ENCODE measurements at regions of chr14 and their contacts with region 1.

Region 1: DNA sequence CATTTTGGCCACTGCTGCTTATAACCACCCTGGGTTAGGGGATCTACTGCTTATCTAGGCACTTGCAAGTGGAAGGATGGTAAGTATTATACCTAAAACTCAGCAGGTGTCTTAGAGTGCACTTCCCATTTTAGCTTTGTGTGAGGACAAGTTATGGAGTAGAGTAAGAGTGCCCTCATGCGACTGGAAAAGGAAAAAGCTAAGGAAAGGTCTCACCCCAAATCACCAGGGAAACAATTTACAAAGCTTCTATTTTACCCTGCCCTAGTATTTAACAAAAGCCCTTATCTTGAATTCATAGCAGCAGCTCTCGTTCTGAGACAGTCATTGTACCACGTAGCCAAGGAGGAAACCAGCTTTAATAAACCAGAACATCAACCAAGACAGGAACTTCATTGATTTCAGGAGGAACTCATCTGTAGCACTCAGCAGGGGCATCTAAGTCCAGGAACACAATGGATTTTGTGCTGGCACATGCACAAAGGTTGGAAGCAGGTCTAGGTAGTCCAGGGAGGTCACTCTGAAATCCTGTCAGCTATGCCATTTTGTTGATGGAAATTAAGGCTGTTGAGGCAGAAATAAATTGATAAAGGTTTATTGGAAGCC is 2.9 kb downstream of the RDH12 start:
- DNase-seq: no peak
- H3K4me3 ChIP-seq: no peak overlapping the region
- H3K27me3 ChIP-seq: no peaks in the 10 kb centered on the region
- CTCF ChIP-seq: peak; percentile 79

Region 2: GRCh38 chr14:67418401-67419174 is 286.0 kb before region 1 on chr14:
- CTCF ChIA-PET with region 1: no interaction called
- POLR2A ChIA-PET with region 1: no interaction called
- DNase-seq: no peak
- H3K4me3 ChIP-seq: no peak overlapping the region
- H3K27me3 ChIP-seq: no peaks in the 10 kb centered on the region
- CTCF ChIP-seq: no peak

Region 3: DNA sequence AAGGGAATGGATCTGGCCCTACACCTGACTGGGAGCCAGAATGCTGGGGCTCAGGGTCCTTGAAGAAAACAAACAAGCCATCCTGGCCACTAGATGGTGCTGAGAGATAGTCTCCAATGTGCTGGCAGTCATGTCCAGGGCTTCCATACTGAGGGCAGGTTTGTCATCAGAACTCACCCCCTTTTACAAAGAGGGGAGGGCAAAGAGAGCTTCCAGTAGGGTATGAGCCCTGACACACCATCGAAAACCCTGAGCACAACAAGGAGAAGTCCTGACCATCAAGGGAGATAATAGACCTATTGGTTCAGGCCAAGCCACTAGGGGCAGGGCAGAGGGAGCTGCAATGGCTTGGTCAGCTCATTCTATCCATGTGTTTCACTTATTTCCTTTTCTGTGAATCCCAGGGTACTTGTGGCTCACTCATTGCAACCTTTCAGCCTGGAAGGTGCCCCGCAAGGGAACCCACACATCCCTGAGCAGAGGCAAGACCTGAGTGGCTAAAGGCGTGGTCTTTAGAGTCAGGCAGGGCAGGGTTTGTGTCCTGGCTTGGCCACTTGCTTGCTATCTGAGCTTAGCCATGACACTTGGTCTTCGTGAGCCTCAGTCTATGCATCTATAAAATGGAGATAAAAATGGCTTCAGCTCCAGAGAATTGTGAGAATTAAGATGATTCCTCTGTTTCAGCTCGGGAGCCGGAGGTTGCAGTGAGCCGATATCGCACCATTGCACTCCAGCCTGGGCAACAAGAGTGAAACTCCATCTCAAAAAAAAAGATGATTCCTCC is 177.7 kb before region 1 on chr14:
- CTCF ChIA-PET with region 1: interaction called, 28 read pairs
- POLR2A ChIA-PET with region 1: no interaction called
- DNase-seq: no peak
- H3K4me3 ChIP-seq: no peak overlapping the region
- H3K27me3 ChIP-seq: peaks cover 16% of the 10 kb centered on the region
- CTCF ChIP-seq: peak; percentile 77

Region 4: GRCh38 chr14:67583711-67584644 is 120.6 kb before region 1 on chr14:
- CTCF ChIA-PET with region 1: interaction called, 189 read pairs
- POLR2A ChIA-PET with region 1: interaction called, 4 read pairs
- DNase-seq: no peak
- H3K4me3 ChIP-seq: no peak overlapping the region
- H3K27me3 ChIP-seq: no peaks in the 10 kb centered on the region
- CTCF ChIP-seq: peak; percentile 79

Region 5: GRCh38 chr14:67619446-67620216 is 85.0 kb before region 1 on chr14 and contains the start of gene ARG2:
- CTCF ChIA-PET with region 1: interaction called, 50 read pairs
- POLR2A ChIA-PET with region 1: no interaction called
- DNase-seq: peak; percentile 41
- H3K4me3 ChIP-seq: peak within 1 kb of the TSS; percentile 63
- H3K27me3 ChIP-seq: no peaks in the 10 kb centered on the region
- CTCF ChIP-seq: no peak
- polyA plus RNA-seq, gene ARG2: 7.0 and 7.7 TPM in 2 replicates

Region 6: DNA sequence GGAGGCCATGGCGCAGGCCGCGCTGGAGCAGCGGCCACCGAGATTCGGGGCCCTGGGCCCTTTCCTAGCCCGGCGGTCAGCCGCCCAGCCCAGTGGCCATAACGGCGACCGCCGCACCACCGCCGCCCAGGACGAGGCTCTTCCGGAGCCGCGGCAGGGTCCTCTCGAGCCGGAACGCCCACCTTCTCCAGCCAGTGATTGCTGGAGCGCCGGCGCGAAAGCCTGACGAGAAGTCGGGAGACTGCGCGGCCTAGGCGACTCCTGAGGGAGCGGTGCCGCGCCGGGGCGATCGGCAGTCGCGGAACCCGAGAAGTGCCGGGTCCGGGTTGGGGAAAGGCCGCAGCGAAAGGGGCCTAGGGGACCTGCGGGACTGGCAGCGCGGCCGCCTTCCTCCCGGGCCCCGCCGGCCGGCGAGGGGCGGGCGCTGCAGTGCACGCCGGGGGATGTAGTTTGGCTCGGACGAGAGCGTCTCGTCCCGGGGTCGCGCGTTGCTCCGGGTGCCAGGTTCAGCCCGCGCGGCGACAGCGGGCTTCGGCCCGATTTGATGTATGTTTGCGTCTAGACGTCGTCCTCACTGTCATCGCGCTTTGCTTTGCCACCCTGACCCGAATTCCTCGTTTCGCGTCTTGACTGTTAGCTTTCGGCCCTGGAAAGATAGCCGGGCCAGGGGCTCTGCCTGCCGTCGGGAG is 30.0 kb before region 1 on chr14 and contains the start of gene VTI1B:
- CTCF ChIA-PET with region 1: interaction called, 11 read pairs
- POLR2A ChIA-PET with region 1: no interaction called
- DNase-seq: no peak
- H3K4me3 ChIP-seq: peak within 1 kb of the TSS; percentile 97
- H3K27me3 ChIP-seq: no peaks in the 10 kb centered on the region
- CTCF ChIP-seq: peak; percentile 47
- polyA plus RNA-seq, gene VTI1B: 66.2 and 94.0 TPM in 2 replicates

Measured in BJ (cell line).